CD8-positive, alpha-beta T cell (primary cell): ENCODE measurements at regions of chr2 and their contacts with region 1.

Region 1: GRCh38 chr2:31688282-31688681 is 107.5 kb upstream of the SRD5A2 start:
- DNase-seq: peak in 2 of 9 experiments; percentile 10 to 18
- ATAC-seq: no peak
- H3K4me3 ChIP-seq: no peak overlapping the region
- H3K4me3 Mint-ChIP-seq: no peak overlapping the region
- H3K27ac ChIP-seq: no peak overlapping the region
- H3K27ac Mint-ChIP-seq: no peak overlapping the region
- H3K4me1 ChIP-seq: no peaks in the 10 kb centered on the region
- H3K4me1 Mint-ChIP-seq: no peaks in the 10 kb centered on the region
- H3K27me3 ChIP-seq: no peaks in the 10 kb centered on the region
- H3K27me3 Mint-ChIP-seq: peaks cover 7% of the 10 kb centered on the region
- CTCF ChIP-seq: peak; percentile 57

Region 2: GRCh38 chr2:31704561-31705212 is 16.4 kb after region 1 on chr2:
- CTCF ChIA-PET with region 1: no interaction called
- POLR2A ChIA-PET with region 1: no interaction called
- intact Hi-C with region 1: loop called in 1 of 2 experiments (anchors 1 kb)
- DNase-seq: no peak
- ATAC-seq: no peak
- H3K4me3 ChIP-seq: no peak overlapping the region
- H3K4me3 Mint-ChIP-seq: no peak overlapping the region
- H3K27ac ChIP-seq: no peak overlapping the region
- H3K27ac Mint-ChIP-seq: no peak overlapping the region
- H3K4me1 ChIP-seq: no peaks in the 10 kb centered on the region
- H3K4me1 Mint-ChIP-seq: no peaks in the 10 kb centered on the region
- H3K27me3 ChIP-seq: no peaks in the 10 kb centered on the region
- H3K27me3 Mint-ChIP-seq: peaks cover 6% of the 10 kb centered on the region
- CTCF ChIP-seq: no peak

Region 3: GRCh38 chr2:32135409-32135808 is 447.1 kb after region 1 on chr2:
- CTCF ChIA-PET with region 1: no interaction called
- POLR2A ChIA-PET with region 1: no interaction called
- intact Hi-C with region 1: loop called in 1 of 2 experiments (anchors 5 kb)
- DNase-seq: peak in 2 of 9 experiments; percentile 16 to 38
- ATAC-seq: no peak
- H3K4me3 ChIP-seq: no peak overlapping the region
- H3K4me3 Mint-ChIP-seq: no peak overlapping the region
- H3K27ac ChIP-seq: no peak overlapping the region
- H3K27ac Mint-ChIP-seq: no peak overlapping the region
- H3K4me1 ChIP-seq: no peaks in the 10 kb centered on the region
- H3K4me1 Mint-ChIP-seq: no peaks in the 10 kb centered on the region
- H3K27me3 ChIP-seq: no peaks in the 10 kb centered on the region
- H3K27me3 Mint-ChIP-seq: no peaks in the 10 kb centered on the region
- CTCF ChIP-seq: peak; percentile 15